GM12878 (cell line): ENCODE measurements at regions of chr2 and their contacts with region 1.

Region 1: DNA sequence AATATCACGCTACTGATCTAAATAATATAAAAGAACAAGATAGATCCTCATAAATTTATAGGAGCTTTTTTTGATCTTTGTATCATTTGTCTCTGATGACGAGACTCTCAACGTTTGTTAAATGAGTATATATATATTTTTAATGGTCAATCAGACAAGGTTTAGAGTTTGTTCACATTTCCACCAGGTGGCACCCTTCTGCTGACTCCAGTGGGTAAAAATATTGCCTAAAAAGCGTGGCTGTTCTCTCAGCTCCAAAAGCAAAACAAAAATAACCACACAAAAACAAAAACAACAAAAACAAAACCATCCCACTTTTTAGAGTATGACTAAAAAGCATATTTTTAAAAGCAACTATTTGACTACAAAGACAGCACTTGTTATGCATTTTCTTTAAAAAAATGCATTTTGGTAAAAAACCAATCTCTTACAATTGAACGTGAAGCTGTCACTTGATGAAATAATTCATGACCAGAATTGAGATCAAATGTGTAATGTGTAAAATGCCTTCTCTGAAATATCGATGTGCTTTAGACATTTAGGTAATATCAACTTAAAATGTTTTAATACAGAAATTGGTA is 723.2 kb downstream of the DPP10 start:
- DNase-seq: no peak
- ATAC-seq: peak; percentile 60; the same call in 2 of the 3 replicates
- H3K4me3 ChIP-seq: no peak overlapping the region
- H3K27ac ChIP-seq: no peak overlapping the region
- H3K4me1 ChIP-seq: no peaks in the 10 kb centered on the region
- H3K27me3 ChIP-seq: peaks cover 0 to 1% of the 10 kb centered on the region in 2 experiments; a peak in 1 of 4 replicates
- CTCF ChIP-seq: peak; percentile 36 to 48 (median 47); a peak in 5 of 6 replicates
- EP300 ChIP-seq: no peak
- POLR2A ChIP-seq: no peak
- RAD21 ChIP-seq: peak; percentile 50

Region 2: DNA sequence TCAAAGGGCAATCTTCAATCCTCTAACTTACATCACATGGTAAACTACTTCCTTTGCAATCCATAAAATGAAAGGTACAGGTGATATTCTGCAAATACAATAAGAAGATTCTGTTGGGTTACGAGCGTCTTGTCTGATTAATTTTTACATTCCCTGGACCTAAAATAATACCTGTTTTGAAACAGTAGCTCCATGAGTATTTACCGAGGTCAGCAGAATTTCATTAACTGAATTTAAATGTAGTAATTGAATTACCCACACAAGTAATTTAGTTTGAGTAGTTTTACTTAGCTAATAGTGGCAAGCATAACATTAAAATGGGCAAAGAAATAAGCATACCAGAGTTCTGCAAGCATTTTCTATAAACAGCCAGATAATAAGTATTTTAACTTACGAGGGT is 71.2 kb before region 1 on chr2:
- CTCF ChIA-PET with region 1: no interaction called
- POLR2A ChIA-PET with region 1: no interaction called
- RAD21 ChIA-PET with region 1: no interaction called
- SMC1A ChIA-PET with region 1: no interaction called
- in situ Hi-C with region 1: no loop called
- intact Hi-C with region 1: no loop called
- DNase-seq: no peak
- ATAC-seq: no peak
- H3K4me3 ChIP-seq: no peak overlapping the region
- H3K27ac ChIP-seq: no peak overlapping the region
- H3K4me1 ChIP-seq: no peaks in the 10 kb centered on the region
- H3K27me3 ChIP-seq: no peaks in the 10 kb centered on the region
- CTCF ChIP-seq: no peak
- EP300 ChIP-seq: no peak
- POLR2A ChIP-seq: no peak
- RAD21 ChIP-seq: no peak

Region 3: GRCh38 chr2:115650827-115651226 is 485.2 kb after region 1 on chr2:
- CTCF ChIA-PET with region 1: no interaction called
- POLR2A ChIA-PET with region 1: no interaction called
- RAD21 ChIA-PET with region 1: no interaction called
- SMC1A ChIA-PET with region 1: no interaction called
- in situ Hi-C with region 1: no loop called
- intact Hi-C with region 1: loop called (anchors 10 kb)
- DNase-seq: no peak
- ATAC-seq: no peak
- H3K4me3 ChIP-seq: no peak overlapping the region
- H3K27ac ChIP-seq: no peak overlapping the region
- H3K4me1 ChIP-seq: no peaks in the 10 kb centered on the region
- H3K27me3 ChIP-seq: no peaks in the 10 kb centered on the region
- CTCF ChIP-seq: no peak; a peak in 1 of 6 replicates
- EP300 ChIP-seq: no peak
- POLR2A ChIP-seq: no peak
- RAD21 ChIP-seq: no peak